K562 (cell line): ENCODE measurements at regions of chr1 and their contacts with region 1.

Region 1: GRCh38 chr1:172719694-172720138 is 60.8 kb downstream of the FASLG start:
- DNase-seq: peak; percentile 52 to 61 (median 56)
- ATAC-seq: peak; percentile 85
- H3K4me3 ChIP-seq: no peak overlapping the region
- H3K27ac ChIP-seq: no peak overlapping the region
- H3K4me1 ChIP-seq: peaks cover 3 to 22% of the 10 kb centered on the region in 2 experiments; a peak in 4 of 5 replicates
- H3K27me3 ChIP-seq: no peaks in the 10 kb centered on the region
- CTCF ChIP-seq: peak; percentile 64 to 85 (median 68); a peak in 5 of 6 replicates
- EP300 ChIP-seq: no peak
- POLR2A ChIP-seq: no peak
- RAD21 ChIP-seq: peak; percentile 80 to 88

Region 2: DNA sequence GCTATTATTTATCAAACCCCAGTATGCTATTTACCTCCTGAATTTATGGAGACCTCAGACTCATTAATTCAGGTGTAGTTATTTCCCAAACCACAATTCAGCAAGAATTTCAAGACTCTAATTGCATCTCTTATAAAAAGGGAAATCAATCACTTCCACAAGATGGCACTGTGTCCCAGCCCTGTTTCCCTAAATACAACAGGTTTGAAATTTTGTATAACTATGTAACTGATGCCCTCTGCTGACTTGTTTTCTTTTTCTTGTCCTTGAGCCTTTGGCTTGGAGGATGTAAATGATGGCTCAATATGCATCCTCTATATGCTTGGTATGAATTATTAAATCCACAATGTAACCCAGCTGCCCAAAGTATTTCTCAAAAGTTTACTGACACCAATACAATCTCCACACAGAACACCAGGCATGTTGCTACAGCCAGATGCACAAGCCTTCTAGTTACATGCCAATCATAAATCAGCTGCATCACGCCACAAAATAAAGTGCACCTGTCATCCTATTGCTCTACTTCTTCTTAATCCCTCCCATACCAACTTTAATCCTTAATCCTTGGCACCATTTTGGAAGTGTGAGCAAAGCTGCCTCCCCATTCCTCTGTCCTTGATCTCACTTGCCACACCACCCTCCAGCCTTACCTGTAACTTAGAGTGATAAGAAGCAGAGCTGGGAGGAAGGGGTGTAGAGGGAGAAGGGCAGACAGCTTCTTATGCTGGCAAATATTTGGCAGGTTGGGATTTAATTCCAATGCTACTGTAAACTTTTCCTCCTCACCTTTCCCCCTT is 290.2 kb before region 1 on chr1:
- CTCF ChIA-PET with region 1: interaction called, 4 read pairs
- POLR2A ChIA-PET with region 1: no interaction called
- in situ Hi-C with region 1: no loop called
- intact Hi-C with region 1: loop called (anchors 1 kb)
- DNase-seq: peak; percentile 45 to 80 (median 55)
- ATAC-seq: peak; percentile 82
- H3K4me3 ChIP-seq: no peak overlapping the region
- H3K27ac ChIP-seq: no peak overlapping the region
- H3K4me1 ChIP-seq: peaks cover 0 to 25% of the 10 kb centered on the region in 2 experiments; a peak in 2 of 5 replicates
- H3K27me3 ChIP-seq: no peaks in the 10 kb centered on the region
- CTCF ChIP-seq: peak; percentile 83 to 99 (median 94)
- EP300 ChIP-seq: no peak
- POLR2A ChIP-seq: no peak
- RAD21 ChIP-seq: peak; percentile 93 to 99

Region 3: GRCh38 chr1:172497230-172497629 is 222.5 kb before region 1 on chr1:
- CTCF ChIA-PET with region 1: no interaction called
- POLR2A ChIA-PET with region 1: no interaction called
- in situ Hi-C with region 1: no loop called
- intact Hi-C with region 1: no loop called
- DNase-seq: no peak
- ATAC-seq: no peak; the same call in 2 of the 3 replicates
- H3K4me3 ChIP-seq: no peak overlapping the region
- H3K27ac ChIP-seq: no peak overlapping the region
- H3K4me1 ChIP-seq: peaks cover 0 to 13% of the 10 kb centered on the region in 2 experiments; a peak in 3 of 5 replicates
- H3K27me3 ChIP-seq: no peaks in the 10 kb centered on the region
- CTCF ChIP-seq: no peak
- EP300 ChIP-seq: no peak
- POLR2A ChIP-seq: no peak
- RAD21 ChIP-seq: no peak

Region 4: GRCh38 chr1:172532700-172533509 is 186.8 kb before region 1 on chr1 and contains the start of gene SUCO:
- CTCF ChIA-PET with region 1: no interaction called
- POLR2A ChIA-PET with region 1: interaction called, 5 read pairs
- in situ Hi-C with region 1: no loop called
- intact Hi-C with region 1: loop called (anchors 2 kb)
- DNase-seq: peak; percentile 99 to 100 (median 99)
- ATAC-seq: peak; percentile 92
- H3K4me3 ChIP-seq: peak within 1 kb of the TSS; percentile 59
- H3K27ac ChIP-seq: peak within 1 kb of the TSS; percentile 99
- H3K4me1 ChIP-seq: peaks cover 3 to 42% of the 10 kb centered on the region in 2 experiments; a peak in 3 of 5 replicates
- H3K27me3 ChIP-seq: no peaks in the 10 kb centered on the region
- CTCF ChIP-seq: peak in 1 of 3 experiments; percentile 21; a peak in 2 of 6 replicates
- EP300 ChIP-seq: no peak; the same call in 1 of the 2 replicates
- POLR2A ChIP-seq: peak; percentile 93
- RAD21 ChIP-seq: peak; percentile 24 to 30; a peak in 3 of 4 replicates
- polyA plus RNA-seq, gene SUCO: 2.5 to 3.6 TPM

Region 5: GRCh38 chr1:172609528-172609927 is 110.2 kb before region 1 on chr1:
- CTCF ChIA-PET with region 1: interaction called, 17 read pairs
- POLR2A ChIA-PET with region 1: no interaction called
- in situ Hi-C with region 1: no loop called
- intact Hi-C with region 1: loop called (anchors 1 kb)
- DNase-seq: peak in 2 of 4 experiments; percentile 27 to 31
- ATAC-seq: peak; percentile 76; the same call in 2 of the 3 replicates
- H3K4me3 ChIP-seq: no peak overlapping the region
- H3K27ac ChIP-seq: no peak overlapping the region
- H3K4me1 ChIP-seq: peaks cover 0 to 5% of the 10 kb centered on the region in 2 experiments; a peak in 2 of 5 replicates
- H3K27me3 ChIP-seq: no peaks in the 10 kb centered on the region
- CTCF ChIP-seq: peak in 1 of 3 experiments; percentile 68; a peak in 2 of 6 replicates
- EP300 ChIP-seq: no peak
- POLR2A ChIP-seq: no peak
- RAD21 ChIP-seq: peak; percentile 69 to 93

Region 6: GRCh38 chr1:172662464-172663109 is 57.1 kb before region 1 on chr1:
- CTCF ChIA-PET with region 1: no interaction called
- POLR2A ChIA-PET with region 1: no interaction called
- in situ Hi-C with region 1: no loop called
- intact Hi-C with region 1: loop called (anchors 2 kb)
- DNase-seq: peak in 3 of 4 experiments; percentile 22 to 65 (median 63)
- ATAC-seq: peak; percentile 82
- H3K4me3 ChIP-seq: peak overlapping the region; percentile 12; the same call in 1 of the 2 replicates
- H3K27ac ChIP-seq: no peak overlapping the region; the same call in 2 of the 3 replicates
- H3K4me1 ChIP-seq: peaks cover 2 to 15% of the 10 kb centered on the region in 2 experiments; a peak in 3 of 5 replicates
- H3K27me3 ChIP-seq: no peaks in the 10 kb centered on the region
- CTCF ChIP-seq: no peak
- EP300 ChIP-seq: no peak
- POLR2A ChIP-seq: no peak
- RAD21 ChIP-seq: 0 out of 4 replicates have a peak, but pooled peaks of 1 of the 2 experiments have one; percentile 10